Prostate gland (tissue), 2 donors: ENCODE measurements at regions of chr13 and their contacts with region 1.

Region 1: DNA sequence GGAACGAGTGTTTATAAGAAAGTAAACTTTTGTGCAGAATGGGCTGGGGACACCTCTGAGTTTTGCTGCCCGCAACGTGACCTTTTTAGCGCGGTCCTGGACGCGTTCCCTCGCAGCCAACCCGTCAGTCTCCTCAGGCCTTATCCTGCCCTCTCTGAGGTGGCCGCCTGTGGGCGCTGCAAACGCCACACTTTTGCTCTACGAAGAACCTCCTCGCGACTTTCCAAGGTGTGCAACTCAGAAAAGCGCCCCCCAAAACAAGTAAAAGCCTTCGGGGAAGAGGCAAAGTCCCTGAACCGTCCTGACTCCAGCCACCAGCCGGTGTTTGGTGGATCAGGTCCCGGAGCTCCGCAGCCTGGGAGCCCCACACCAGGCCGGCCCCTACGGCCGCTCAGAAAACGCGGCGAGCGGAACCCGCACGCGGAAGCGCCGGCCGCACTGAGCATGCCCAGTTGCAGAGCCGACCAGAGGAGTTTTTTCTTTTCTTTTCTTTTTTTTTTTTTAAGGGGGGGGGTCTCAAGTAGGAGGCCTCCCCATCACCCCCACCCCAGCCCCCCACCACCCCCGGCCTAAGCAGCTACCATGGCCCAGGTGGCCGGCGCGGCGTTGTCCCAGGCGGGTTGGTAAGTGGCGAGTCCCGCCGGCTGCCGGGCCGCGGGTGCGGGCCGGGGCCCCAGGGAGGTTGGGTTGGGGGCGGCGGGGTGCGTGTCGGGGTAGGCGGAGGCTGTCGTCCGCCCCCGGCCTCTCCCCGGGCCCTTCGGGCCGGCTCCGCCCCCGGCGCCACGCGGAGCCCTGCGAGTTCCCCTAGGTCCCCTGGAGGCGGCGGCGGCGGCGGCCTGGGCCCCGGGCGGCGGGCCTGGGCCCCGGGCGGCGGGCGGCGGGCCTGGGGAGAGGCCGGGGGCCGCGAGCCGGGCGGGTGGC is at the start of gene TDRD3:
- DNase-seq: peak; percentile 81
- H3K4me3 ChIP-seq: peak within 1 kb of the TSS; percentile 65 to 73
- H3K27ac ChIP-seq: peak within 1 kb of the TSS; percentile 94 to 96
- H3K4me1 ChIP-seq: peaks cover 13% of the 10 kb centered on the region
- H3K27me3 ChIP-seq: no peaks in the 10 kb centered on the region
- CTCF ChIP-seq: peak; percentile 56 to 80 (median 72)
- POLR2A ChIP-seq: peak; percentile 48
- total RNA-seq, gene TDRD3: 14.6 to 14.7 TPM

Region 2: DNA sequence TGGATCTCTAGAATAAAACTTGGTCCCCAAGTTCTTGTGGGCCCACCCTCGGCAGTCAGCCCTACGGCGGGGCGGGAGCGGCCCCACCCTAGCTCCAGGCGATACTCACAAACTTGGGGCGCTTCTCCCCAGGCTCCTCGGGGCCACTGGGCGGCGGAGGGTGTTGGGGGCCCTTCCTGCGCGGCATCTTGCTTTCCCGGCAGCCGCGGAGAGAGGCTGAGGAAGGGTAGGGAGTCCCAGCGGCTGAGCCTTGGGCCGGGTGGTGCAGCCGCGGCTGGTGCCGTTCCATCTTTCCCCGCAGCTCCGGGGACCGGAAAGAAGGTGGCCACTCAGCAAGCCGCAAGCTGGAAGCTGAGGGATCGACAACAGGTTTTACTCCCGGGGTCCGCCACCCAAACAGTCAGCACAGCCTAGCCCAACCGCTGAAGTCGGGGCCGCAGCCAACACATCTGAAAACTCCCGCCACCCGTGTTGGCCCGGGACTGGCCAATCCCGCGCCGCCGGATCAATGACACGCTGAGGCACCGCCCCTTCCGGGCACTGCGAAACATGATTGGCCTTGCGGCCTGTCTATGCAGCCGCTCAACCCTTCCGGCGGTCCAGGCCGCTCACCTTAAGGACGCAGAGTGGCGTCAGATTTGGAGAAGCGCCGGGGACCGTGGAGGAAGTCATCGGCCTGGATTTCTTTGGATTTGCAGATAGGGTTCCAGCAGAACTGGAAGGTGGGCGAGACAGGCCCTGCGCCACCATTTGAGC is 233.4 kb before region 1 on chr13 and contains the start of gene DIAPH3:
- intact Hi-C with region 1: loop called (anchors 10 kb)
- DNase-seq: peak; percentile 93
- H3K4me3 ChIP-seq: peak within 1 kb of the TSS; percentile 59 to 67
- H3K27ac ChIP-seq: peak within 1 kb of the TSS; percentile 86 to 91
- H3K4me1 ChIP-seq: peaks cover 2% of the 10 kb centered on the region
- H3K27me3 ChIP-seq: no peaks in the 10 kb centered on the region
- CTCF ChIP-seq: no peak
- POLR2A ChIP-seq: peak; percentile 79
- total RNA-seq, gene DIAPH3: 0.27 to 2.4 TPM

Region 3: GRCh38 chr13:60329221-60329983 is 67.6 kb before region 1 on chr13:
- intact Hi-C with region 1: no loop called
- DNase-seq: no peak
- H3K4me3 ChIP-seq: no peak overlapping the region
- H3K27ac ChIP-seq: no peak overlapping the region
- H3K4me1 ChIP-seq: no peaks in the 10 kb centered on the region
- H3K27me3 ChIP-seq: no peaks in the 10 kb centered on the region
- CTCF ChIP-seq: no peak
- POLR2A ChIP-seq: no peak